CD4-positive, alpha-beta memory T cell (primary cell): ENCODE measurements at regions of chr10 and their contacts with region 1.

Region 1: GRCh38 chr10:96334616-96335526 is 23.9 kb downstream of the OPALIN start:
- DNase-seq: peak in 1 of 5 donors; percentile 16
- H3K4me3 ChIP-seq: no peak overlapping the region
- H3K4me3 Mint-ChIP-seq: no peak overlapping the region
- H3K27ac ChIP-seq: no peak overlapping the region
- H3K27ac Mint-ChIP-seq: no peak overlapping the region
- H3K4me1 ChIP-seq: peaks cover 14% of the 10 kb centered on the region
- H3K4me1 Mint-ChIP-seq: peaks cover 13 to 18% (median 13%) of the 10 kb centered on the region in 4 donors
- H3K27me3 ChIP-seq: peaks cover 9% of the 10 kb centered on the region
- H3K27me3 Mint-ChIP-seq: peaks cover 8 to 35% of the 10 kb centered on the region in 2 donors

Region 2: GRCh38 chr10:96319754-96320474 is 15.0 kb before region 1 on chr10:
- CTCF ChIA-PET with region 1: interaction called, 17 read pairs
- POLR2A ChIA-PET with region 1: no interaction called
- intact Hi-C with region 1: no loop called
- DNase-seq: no peak
- H3K4me3 ChIP-seq: no peak overlapping the region
- H3K4me3 Mint-ChIP-seq: no peak overlapping the region
- H3K27ac ChIP-seq: no peak overlapping the region
- H3K27ac Mint-ChIP-seq: no peak overlapping the region
- H3K4me1 ChIP-seq: no peaks in the 10 kb centered on the region
- H3K4me1 Mint-ChIP-seq: peaks cover 0 to 1% (median 0%) of the 10 kb centered on the region in 4 donors
- H3K27me3 ChIP-seq: no peaks in the 10 kb centered on the region
- H3K27me3 Mint-ChIP-seq: peaks cover 17 to 25% of the 10 kb centered on the region in 2 donors